HEK293 (cell line): ENCODE measurements at regions of chr17 and their contacts with region 1.

Region 1: GRCh38 chr17:72985881-72986720 is 106.4 kb downstream of the SLC39A11 start:
- H3K4me3 ChIP-seq: no peak overlapping the region
- H3K27ac ChIP-seq: no peak overlapping the region
- H3K4me1 ChIP-seq: peaks cover 6% of the 10 kb centered on the region; the same call in 1 of the 2 replicates
- CTCF ChIP-seq: no peak

Region 2: GRCh38 chr17:72556944-72557826 is 428.9 kb before region 1 on chr17:
- CTCF ChIA-PET with region 1: interaction called, 11 read pairs
- POLR2A ChIA-PET with region 1: no interaction called
- H3K4me3 ChIP-seq: no peak overlapping the region
- H3K27ac ChIP-seq: no peak overlapping the region
- H3K4me1 ChIP-seq: no peaks in the 10 kb centered on the region
- CTCF ChIP-seq: peak; percentile 75

Region 3: GRCh38 chr17:72839131-72839725 is 146.9 kb before region 1 on chr17:
- CTCF ChIA-PET with region 1: no interaction called
- POLR2A ChIA-PET with region 1: no interaction called
- H3K4me3 ChIP-seq: no peak overlapping the region
- H3K27ac ChIP-seq: no peak overlapping the region
- H3K4me1 ChIP-seq: no peaks in the 10 kb centered on the region
- CTCF ChIP-seq: no peak

Region 4: GRCh38 chr17:72967977-72968585 is 18.0 kb before region 1 on chr17:
- CTCF ChIA-PET with region 1: interaction called, 13 read pairs
- POLR2A ChIA-PET with region 1: no interaction called
- H3K4me3 ChIP-seq: no peak overlapping the region
- H3K27ac ChIP-seq: no peak overlapping the region
- H3K4me1 ChIP-seq: no peaks in the 10 kb centered on the region
- CTCF ChIP-seq: no peak

Region 5: DNA sequence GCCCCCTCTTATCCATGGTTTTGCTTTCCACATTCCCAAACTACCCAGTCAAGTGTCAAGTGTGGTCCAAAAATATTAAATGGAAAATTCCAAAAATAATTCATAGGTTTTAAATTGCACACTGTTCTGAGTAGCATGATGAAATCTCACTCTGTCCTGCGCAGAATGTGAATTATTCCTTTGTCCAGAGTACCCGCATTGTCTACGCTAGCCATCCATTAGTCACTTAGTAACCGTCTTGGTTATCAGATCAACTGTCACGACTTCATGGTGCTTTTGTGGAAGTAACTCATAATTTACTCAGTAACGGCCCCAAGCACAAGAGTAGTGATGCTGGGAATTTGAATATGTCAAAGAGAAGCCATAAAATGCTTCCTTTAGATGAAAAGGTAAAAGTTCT is 11.5 kb after region 1 on chr17:
- CTCF ChIA-PET with region 1: interaction called, 33 read pairs
- POLR2A ChIA-PET with region 1: no interaction called
- H3K4me3 ChIP-seq: no peak overlapping the region
- H3K27ac ChIP-seq: no peak overlapping the region
- H3K4me1 ChIP-seq: no peaks in the 10 kb centered on the region
- CTCF ChIP-seq: no peak

Region 6: GRCh38 chr17:73025041-73025560 is 39.0 kb after region 1 on chr17:
- CTCF ChIA-PET with region 1: interaction called, 11 read pairs
- POLR2A ChIA-PET with region 1: no interaction called
- H3K4me3 ChIP-seq: no peak overlapping the region
- H3K27ac ChIP-seq: no peak overlapping the region
- H3K4me1 ChIP-seq: no peaks in the 10 kb centered on the region
- CTCF ChIP-seq: no peak

Region 7: DNA sequence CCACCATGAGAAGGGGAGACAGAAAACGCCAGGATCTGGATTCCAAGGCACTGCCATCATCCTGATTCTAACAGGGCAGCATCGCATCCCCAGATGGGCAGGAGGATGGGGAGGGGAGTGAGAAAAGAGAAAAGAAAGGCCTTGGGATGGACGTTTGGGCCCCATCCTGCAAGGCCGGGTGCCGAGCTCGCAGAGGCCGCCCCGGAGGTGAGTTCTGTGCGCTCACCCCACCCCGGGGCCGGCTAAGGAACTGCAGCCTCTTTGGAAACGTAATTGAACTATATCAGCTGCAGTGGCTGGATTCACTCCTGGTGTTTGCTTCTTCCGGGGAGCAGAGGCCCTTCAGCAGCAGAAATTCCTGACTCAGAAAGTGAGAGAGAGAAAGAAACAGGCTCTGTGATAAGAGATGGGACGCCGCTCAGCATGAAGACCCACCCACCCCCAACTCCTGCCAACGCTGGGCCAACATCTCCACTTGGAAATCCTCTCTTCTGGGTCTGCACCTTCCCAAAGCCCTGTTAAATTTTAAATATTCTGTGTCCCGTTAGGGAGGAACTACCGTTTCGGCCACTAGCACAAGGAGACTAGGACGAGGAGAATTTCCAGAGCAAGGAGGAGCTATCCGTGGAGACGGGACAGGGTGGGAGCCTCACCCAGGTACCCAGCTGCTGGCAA is 170.2 kb after region 1 on chr17:
- CTCF ChIA-PET with region 1: interaction called, 32 read pairs
- POLR2A ChIA-PET with region 1: interaction called, 6 read pairs
- H3K4me3 ChIP-seq: no peak overlapping the region
- H3K27ac ChIP-seq: peak overlapping the region; percentile 10; the same call in 1 of the 2 replicates
- H3K4me1 ChIP-seq: no peaks in the 10 kb centered on the region; the same call in 1 of the 2 replicates
- CTCF ChIP-seq: peak; percentile 78

Region 8: GRCh38 chr17:73192894-73193701 is 207.0 kb after region 1 on chr17 and contains the start of gene COG1:
- CTCF ChIA-PET with region 1: interaction called, 32 read pairs
- POLR2A ChIA-PET with region 1: interaction called, 4 read pairs
- H3K4me3 ChIP-seq: peak within 1 kb of the TSS; percentile 93
- H3K27ac ChIP-seq: peak within 1 kb of the TSS; percentile 98
- H3K4me1 ChIP-seq: peaks cover 3% of the 10 kb centered on the region; the same call in 1 of the 2 replicates
- CTCF ChIP-seq: peak; percentile 73; the same call in 1 of the 2 replicates

Region 9: GRCh38 chr17:73551759-73552158 is 565.7 kb after region 1 on chr17:
- CTCF ChIA-PET with region 1: no interaction called
- POLR2A ChIA-PET with region 1: no interaction called
- H3K4me3 ChIP-seq: no peak overlapping the region
- H3K27ac ChIP-seq: no peak overlapping the region
- H3K4me1 ChIP-seq: peaks cover 4% of the 10 kb centered on the region; the same call in 1 of the 2 replicates
- CTCF ChIP-seq: no peak